ENCODE measurements at regions of chr5 and their contacts with region 1.

Region 1: DNA sequence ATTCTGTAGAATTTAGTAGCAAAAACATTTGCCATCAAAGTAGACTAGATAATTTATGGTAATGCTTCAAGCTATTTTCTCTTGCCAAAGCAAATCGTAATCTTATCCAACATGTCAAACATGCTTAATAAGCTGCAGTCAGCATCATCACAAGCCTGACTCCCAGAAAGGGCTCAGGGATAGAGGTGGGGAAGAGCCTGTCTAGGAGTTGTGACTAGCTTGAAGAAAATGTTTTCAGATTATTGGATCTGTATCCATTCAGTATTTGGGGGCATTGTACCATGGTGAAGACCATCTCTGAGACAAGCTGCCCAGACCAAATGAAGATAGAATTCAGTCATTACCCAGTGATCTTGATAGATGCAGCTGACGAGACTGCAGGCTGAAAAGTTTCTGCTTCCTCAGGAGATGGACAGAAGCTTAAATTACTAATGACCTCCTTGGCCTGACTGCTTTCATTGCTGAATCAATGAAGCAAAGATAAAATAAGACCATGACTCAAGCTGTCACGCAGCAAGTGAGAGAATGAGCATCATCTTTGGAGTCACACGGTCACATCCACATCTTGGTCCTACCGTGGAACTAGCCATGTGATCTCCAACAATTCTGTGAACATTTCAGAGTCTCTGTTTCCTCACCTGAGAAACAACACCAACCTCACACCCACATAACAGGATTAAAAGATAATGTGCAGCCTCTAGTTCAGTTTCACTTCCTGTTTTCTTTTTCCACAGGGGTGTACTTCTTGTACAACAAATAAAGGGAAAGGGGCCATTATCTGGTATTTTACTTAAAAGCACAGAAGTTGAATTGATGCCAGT is 9.4 kb downstream of the ERAP2 start:
- DNase-seq: peak; percentile 55 to 79 (median 69)
- H3K4me3 ChIP-seq: peak overlapping the region; percentile 8
- H3K4me3 Mint-ChIP-seq: peak overlapping the region; percentile 55 to 85 (median 70)
- H3K27ac ChIP-seq: peak overlapping the region; percentile 43
- H3K27ac Mint-ChIP-seq: peak overlapping the region; percentile 77 to 98 (median 96)
- H3K4me1 ChIP-seq: peaks cover 61% of the 10 kb centered on the region
- H3K4me1 Mint-ChIP-seq: peaks cover 53 to 75% (median 65%) of the 10 kb centered on the region in 4 donors
- H3K27me3 ChIP-seq: no peaks in the 10 kb centered on the region
- H3K27me3 Mint-ChIP-seq: no peaks in the 10 kb centered on the region

Region 2: DNA sequence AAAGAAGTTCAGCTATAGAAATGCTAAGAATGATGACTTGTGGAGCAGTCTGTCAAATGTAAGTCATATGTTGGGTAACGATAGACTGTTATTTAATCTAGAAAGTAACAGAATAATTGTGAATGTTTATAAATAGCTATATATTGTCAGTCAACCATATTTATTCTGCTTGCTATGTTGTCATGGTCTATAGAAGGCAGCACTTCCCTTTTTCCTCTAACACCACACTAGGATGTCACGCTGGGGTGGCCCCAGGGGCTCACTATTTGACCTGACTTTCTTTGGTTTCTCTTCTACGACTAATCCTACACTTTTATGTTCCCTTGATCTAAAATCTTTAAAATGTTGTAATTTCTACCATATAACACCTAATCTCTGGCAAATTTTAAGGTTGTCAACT is 11.1 kb after region 1 on chr5:
- CTCF ChIA-PET with region 1: interaction called, 5 read pairs
- POLR2A ChIA-PET with region 1: interaction called, 11 read pairs
- intact Hi-C with region 1: no loop called
- DNase-seq: no peak
- H3K4me3 ChIP-seq: no peak overlapping the region
- H3K4me3 Mint-ChIP-seq: peak overlapping the region; percentile 56 to 90 (median 80)
- H3K27ac ChIP-seq: peak overlapping the region; percentile 56
- H3K27ac Mint-ChIP-seq: peak overlapping the region; percentile 82 to 97 (median 92)
- H3K4me1 ChIP-seq: peaks cover 37% of the 10 kb centered on the region
- H3K4me1 Mint-ChIP-seq: peaks cover 26 to 55% (median 42%) of the 10 kb centered on the region in 4 donors
- H3K27me3 ChIP-seq: no peaks in the 10 kb centered on the region
- H3K27me3 Mint-ChIP-seq: no peaks in the 10 kb centered on the region